ENCODE measurements at regions of chr20 and their contacts with region 1.

Region 1: GRCh38 chr20:60057123-60057801 is 99.0 kb downstream of the CDH26 start:
- DNase-seq: peak; percentile 42 to 73 (median 59)
- H3K4me3 ChIP-seq: peak overlapping the region; percentile 17
- H3K4me3 Mint-ChIP-seq: peak overlapping the region; percentile 43 to 92 (median 81)
- H3K27ac ChIP-seq: no peak overlapping the region
- H3K27ac Mint-ChIP-seq: peak overlapping the region; percentile 59 to 92 (median 87)
- H3K4me1 ChIP-seq: peaks cover 54% of the 10 kb centered on the region
- H3K4me1 Mint-ChIP-seq: peaks cover 47 to 54% (median 48%) of the 10 kb centered on the region in 3 donors
- H3K27me3 ChIP-seq: no peaks in the 10 kb centered on the region
- H3K27me3 Mint-ChIP-seq: no peaks in the 10 kb centered on the region

Region 2: DNA sequence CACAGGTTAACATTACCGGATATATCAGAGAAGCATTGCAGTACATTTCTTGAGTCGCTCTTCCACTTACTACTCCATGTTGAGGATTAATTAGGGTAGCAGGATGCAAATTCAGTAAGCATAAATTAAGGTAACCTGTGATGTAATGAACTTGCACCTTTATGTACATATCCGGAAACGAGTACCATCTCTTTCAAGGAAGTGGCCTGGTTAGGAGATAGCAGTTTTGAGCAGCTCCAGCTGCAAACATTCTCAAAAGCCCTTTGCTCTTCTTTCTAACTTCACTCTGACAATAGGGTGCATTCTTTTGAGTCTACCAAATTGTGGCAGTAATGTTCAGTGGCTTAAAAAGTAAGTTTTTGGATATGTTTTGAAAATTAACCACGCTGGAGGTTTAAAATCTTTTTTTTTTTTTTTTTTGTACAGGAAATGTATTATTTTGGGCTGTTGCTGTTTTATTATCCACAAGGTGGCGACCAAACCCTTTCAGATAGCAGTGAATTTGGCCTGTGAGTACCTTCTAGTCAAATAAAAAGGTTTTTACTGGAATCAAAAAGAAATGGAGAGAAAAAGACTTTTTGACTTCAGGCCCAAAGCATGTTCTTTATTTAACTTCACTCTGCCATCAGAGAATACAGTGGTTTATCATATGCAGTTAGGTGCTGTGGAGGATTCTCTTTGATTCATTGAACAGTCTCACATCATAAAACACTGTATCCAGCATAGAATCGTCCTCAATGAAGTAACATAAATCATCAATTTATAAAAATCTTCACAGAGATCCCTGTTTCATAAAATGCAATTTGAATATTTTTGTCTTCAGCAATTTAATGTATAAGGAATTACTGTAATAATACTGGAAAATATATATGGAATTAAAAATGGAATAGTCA is 108.2 kb before region 1 on chr20:
- CTCF ChIA-PET with region 1: interaction called, 12 read pairs
- POLR2A ChIA-PET with region 1: no interaction called
- DNase-seq: peak in 2 of 5 donors; percentile 59 to 65
- H3K4me3 ChIP-seq: peak overlapping the region; percentile 18
- H3K4me3 Mint-ChIP-seq: peak overlapping the region; percentile 60 to 88 (median 65)
- H3K27ac ChIP-seq: no peak overlapping the region
- H3K27ac Mint-ChIP-seq: peak overlapping the region; percentile 82 to 95 (median 94)
- H3K4me1 ChIP-seq: peaks cover 8% of the 10 kb centered on the region
- H3K4me1 Mint-ChIP-seq: peaks cover 21 to 37% (median 23%) of the 10 kb centered on the region in 3 donors
- H3K27me3 ChIP-seq: no peaks in the 10 kb centered on the region
- H3K27me3 Mint-ChIP-seq: no peaks in the 10 kb centered on the region

Region 3: GRCh38 chr20:60071965-60072364 is 14.7 kb after region 1 on chr20:
- CTCF ChIA-PET with region 1: no interaction called
- POLR2A ChIA-PET with region 1: no interaction called
- DNase-seq: no peak
- H3K4me3 ChIP-seq: no peak overlapping the region
- H3K4me3 Mint-ChIP-seq: no peak overlapping the region
- H3K27ac ChIP-seq: no peak overlapping the region
- H3K27ac Mint-ChIP-seq: no peak overlapping the region
- H3K4me1 ChIP-seq: no peaks in the 10 kb centered on the region
- H3K4me1 Mint-ChIP-seq: peaks cover 6 to 8% (median 8%) of the 10 kb centered on the region in 3 donors
- H3K27me3 ChIP-seq: no peaks in the 10 kb centered on the region
- H3K27me3 Mint-ChIP-seq: no peaks in the 10 kb centered on the region

Region 4: GRCh38 chr20:60249436-60249835 is 192.2 kb after region 1 on chr20:
- CTCF ChIA-PET with region 1: no interaction called
- POLR2A ChIA-PET with region 1: no interaction called
- DNase-seq: no peak
- H3K4me3 ChIP-seq: no peak overlapping the region
- H3K4me3 Mint-ChIP-seq: no peak overlapping the region
- H3K27ac ChIP-seq: no peak overlapping the region
- H3K27ac Mint-ChIP-seq: no peak overlapping the region
- H3K4me1 ChIP-seq: no peaks in the 10 kb centered on the region
- H3K4me1 Mint-ChIP-seq: no peaks in the 10 kb centered on the region
- H3K27me3 ChIP-seq: no peaks in the 10 kb centered on the region
- H3K27me3 Mint-ChIP-seq: peaks cover 1 to 8% of the 10 kb centered on the region in 2 donors

Region 5: DNA sequence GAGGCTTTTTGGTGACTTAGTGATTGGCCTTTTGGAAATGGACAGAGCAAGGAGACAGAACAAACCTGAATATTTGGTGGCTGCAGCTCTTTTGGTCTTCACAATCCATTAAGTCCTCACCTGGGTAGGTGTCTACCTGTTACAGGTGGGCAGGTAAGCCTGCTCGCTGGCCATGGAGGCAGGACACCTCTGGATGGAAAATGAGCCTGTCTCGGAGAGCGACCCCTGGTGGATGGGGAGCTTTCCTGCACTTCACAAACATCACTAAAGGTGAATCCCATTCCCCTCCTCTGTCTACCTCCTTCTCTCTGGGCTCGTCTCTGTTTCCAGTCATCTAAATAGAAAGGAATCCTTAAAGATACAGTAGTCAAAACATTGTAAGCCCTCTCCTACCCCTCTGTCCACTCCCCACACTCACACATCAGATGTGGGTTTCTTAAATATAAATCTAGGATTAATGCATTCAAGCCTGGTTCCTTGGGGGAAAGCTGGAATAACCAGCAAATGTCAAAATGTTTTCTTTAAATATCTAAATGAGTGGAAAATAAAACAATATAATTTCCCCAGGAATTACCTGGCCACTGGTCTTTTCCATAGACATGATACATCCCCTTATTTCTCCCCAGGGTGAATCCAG is 205.8 kb after region 1 on chr20:
- CTCF ChIA-PET with region 1: interaction called, 23 read pairs
- POLR2A ChIA-PET with region 1: no interaction called
- DNase-seq: peak; percentile 21 to 57 (median 45)
- H3K4me3 ChIP-seq: no peak overlapping the region
- H3K4me3 Mint-ChIP-seq: no peak overlapping the region
- H3K27ac ChIP-seq: no peak overlapping the region
- H3K27ac Mint-ChIP-seq: no peak overlapping the region
- H3K4me1 ChIP-seq: peaks cover 9% of the 10 kb centered on the region
- H3K4me1 Mint-ChIP-seq: peaks cover 6 to 7% (median 6%) of the 10 kb centered on the region in 3 donors
- H3K27me3 ChIP-seq: no peaks in the 10 kb centered on the region
- H3K27me3 Mint-ChIP-seq: peaks cover 6 to 7% of the 10 kb centered on the region in 2 donors

Region 6: GRCh38 chr20:60403105-60403741 is 346.0 kb after region 1 on chr20:
- CTCF ChIA-PET with region 1: no interaction called
- POLR2A ChIA-PET with region 1: no interaction called
- DNase-seq: no peak
- H3K4me3 ChIP-seq: no peak overlapping the region
- H3K4me3 Mint-ChIP-seq: no peak overlapping the region
- H3K27ac ChIP-seq: no peak overlapping the region
- H3K27ac Mint-ChIP-seq: no peak overlapping the region
- H3K4me1 ChIP-seq: no peaks in the 10 kb centered on the region
- H3K4me1 Mint-ChIP-seq: peaks cover 0 to 1% (median 0%) of the 10 kb centered on the region in 3 donors
- H3K27me3 ChIP-seq: no peaks in the 10 kb centered on the region
- H3K27me3 Mint-ChIP-seq: peaks cover 3 to 7% of the 10 kb centered on the region in 2 donors